ENCODE measurements at regions of chr1 and their contacts with region 1.

Region 1: DNA sequence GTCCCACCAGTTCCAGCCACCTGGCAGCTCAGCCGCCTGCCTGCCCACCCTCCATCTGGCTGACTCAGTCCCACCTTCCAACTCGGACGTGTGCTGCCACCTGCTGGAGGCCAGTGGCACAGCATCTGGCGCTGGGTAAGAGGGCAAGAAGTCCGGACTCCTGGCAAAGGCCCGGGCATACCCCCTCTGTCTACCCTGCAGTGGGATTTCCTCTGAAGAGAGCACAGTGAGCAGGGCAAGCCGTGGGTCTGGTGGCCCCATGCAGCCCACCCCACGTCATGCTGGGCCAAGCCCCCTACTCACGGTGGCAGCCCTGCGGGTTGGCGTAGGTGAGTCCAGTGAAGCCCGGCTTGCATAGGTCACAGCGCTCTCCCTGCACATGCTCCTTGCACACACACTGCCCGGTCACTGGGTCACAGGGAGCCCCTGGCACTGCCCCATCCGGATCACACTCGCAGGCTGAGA is 24.5 kb downstream of the LAMB3 start:
- DNase-seq: peak; percentile 78
- H3K4me3 ChIP-seq: no peak overlapping the region
- H3K27ac ChIP-seq: no peak overlapping the region
- H3K4me1 ChIP-seq: no peaks in the 10 kb centered on the region
- H3K27me3 ChIP-seq: no peaks in the 10 kb centered on the region
- CTCF ChIP-seq: peak; percentile 95 to 99
- POLR2A ChIP-seq: no peak

Region 2: GRCh38 chr1:209576798-209577197 is 51.0 kb before region 1 on chr1:
- CTCF ChIA-PET with region 1: interaction called, 119 read pairs
- POLR2A ChIA-PET with region 1: no interaction called
- dilution Hi-C with region 1: no loop called
- intact Hi-C with region 1: loop called (anchors 1 kb)
- DNase-seq: peak; percentile 72
- H3K4me3 ChIP-seq: no peak overlapping the region
- H3K27ac ChIP-seq: no peak overlapping the region
- H3K4me1 ChIP-seq: peaks cover 8% of the 10 kb centered on the region
- H3K27me3 ChIP-seq: peaks cover 13 to 17% of the 10 kb centered on the region in 2 experiments
- CTCF ChIP-seq: peak; percentile 94 to 95
- POLR2A ChIP-seq: no peak

Region 3: GRCh38 chr1:209601809-209602657 is 25.7 kb before region 1 on chr1:
- CTCF ChIA-PET with region 1: interaction called, 23 read pairs
- POLR2A ChIA-PET with region 1: no interaction called
- dilution Hi-C with region 1: no loop called
- intact Hi-C with region 1: loop called (anchors 1 kb)
- DNase-seq: peak; percentile 45
- H3K4me3 ChIP-seq: no peak overlapping the region
- H3K27ac ChIP-seq: no peak overlapping the region
- H3K4me1 ChIP-seq: peaks cover 5% of the 10 kb centered on the region
- H3K27me3 ChIP-seq: peaks cover 3 to 18% of the 10 kb centered on the region in 2 experiments
- CTCF ChIP-seq: peak; percentile 62 to 66
- POLR2A ChIP-seq: no peak

Region 4: DNA sequence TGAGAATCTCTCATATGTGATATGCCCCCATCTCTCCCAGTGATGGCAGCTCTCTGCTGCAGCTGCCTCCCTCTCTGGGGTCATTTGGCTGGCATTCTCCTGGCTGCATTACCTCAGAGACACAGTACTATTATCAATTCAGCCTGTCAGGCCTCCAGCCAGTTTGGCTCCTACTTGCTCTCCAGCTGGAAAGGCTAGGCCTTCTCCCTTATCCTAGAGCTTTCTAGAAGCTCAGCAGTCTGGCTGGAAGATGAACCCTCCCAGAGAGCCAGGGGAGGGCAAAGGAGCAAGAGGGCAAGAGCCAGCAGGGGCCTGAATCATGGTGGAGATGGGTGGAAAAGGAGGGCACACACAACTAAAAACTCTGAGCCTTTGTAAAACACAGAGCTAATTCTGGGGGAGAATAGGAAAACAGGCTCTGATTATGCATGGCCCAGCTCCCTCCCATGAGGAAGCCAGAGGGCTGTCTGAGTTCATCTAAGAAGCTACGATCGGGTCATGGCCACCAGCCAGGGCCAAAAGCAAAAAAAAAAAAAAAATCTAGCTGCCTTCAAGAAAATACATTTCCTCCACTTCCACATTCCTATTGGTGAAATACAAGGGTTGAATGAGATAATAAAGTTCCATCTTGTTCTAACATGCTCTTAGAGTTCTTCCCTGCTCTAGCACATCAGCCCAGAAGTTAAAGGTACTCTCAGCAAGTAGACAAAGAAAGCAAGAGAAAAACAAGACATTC is 15.7 kb after region 1 on chr1:
- CTCF ChIA-PET with region 1: interaction called, 22 read pairs
- POLR2A ChIA-PET with region 1: interaction called, 3 read pairs
- dilution Hi-C with region 1: no loop called
- intact Hi-C with region 1: no loop called
- DNase-seq: peak; percentile 44
- H3K4me3 ChIP-seq: no peak overlapping the region
- H3K27ac ChIP-seq: no peak overlapping the region
- H3K4me1 ChIP-seq: peaks cover 8% of the 10 kb centered on the region
- H3K27me3 ChIP-seq: no peaks in the 10 kb centered on the region
- CTCF ChIP-seq: no peak
- POLR2A ChIP-seq: no peak

Region 5: DNA sequence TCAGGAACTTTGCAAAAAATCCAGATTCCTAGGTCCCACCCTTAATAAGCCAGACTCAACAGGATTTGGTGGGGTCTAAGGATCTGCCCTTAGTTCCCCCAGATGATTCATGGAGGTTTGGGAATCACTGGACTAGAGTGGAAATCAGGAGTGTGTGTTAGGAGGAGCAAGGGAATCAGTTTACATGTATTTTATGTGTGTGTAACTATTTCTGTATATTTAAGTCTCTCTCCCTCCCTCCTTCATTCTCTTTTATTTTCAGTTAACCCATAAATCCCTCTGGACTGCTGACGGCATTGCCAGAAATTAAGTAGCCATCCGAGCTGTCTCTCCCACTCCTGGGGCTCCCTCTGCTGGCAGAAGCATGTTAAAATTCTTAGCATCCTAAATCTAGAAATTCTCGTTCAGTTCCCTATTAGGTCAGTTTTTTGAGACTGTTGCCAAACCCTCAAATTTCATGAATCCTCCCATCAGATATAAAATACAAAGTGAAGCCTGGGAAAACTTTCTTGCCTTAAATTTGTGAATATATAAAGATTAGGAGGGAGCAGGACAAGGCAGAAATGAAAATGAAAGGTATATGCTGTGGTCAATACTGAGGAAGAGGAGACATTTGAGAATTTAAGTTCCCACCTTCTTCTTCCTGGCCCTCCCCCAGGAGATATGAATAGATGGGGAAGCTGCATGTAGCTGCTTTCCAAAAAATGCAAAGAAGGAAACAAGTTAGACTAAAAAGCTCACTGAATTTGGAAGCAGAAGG is 65.2 kb after region 1 on chr1:
- CTCF ChIA-PET with region 1: interaction called, 34 read pairs
- POLR2A ChIA-PET with region 1: no interaction called
- dilution Hi-C with region 1: no loop called
- intact Hi-C with region 1: loop called (anchors 1 kb)
- DNase-seq: peak; percentile 79
- H3K4me3 ChIP-seq: no peak overlapping the region
- H3K27ac ChIP-seq: no peak overlapping the region
- H3K4me1 ChIP-seq: no peaks in the 10 kb centered on the region
- H3K27me3 ChIP-seq: peaks cover 9 to 13% of the 10 kb centered on the region in 2 experiments
- CTCF ChIP-seq: peak; percentile 66 to 80
- POLR2A ChIP-seq: no peak